Testis (tissue), 5 donors: ENCODE measurements at regions of chr12 and their contacts with region 1.

Region 1: GRCh38 chr12:7108796-7109571 is at the start of gene C1RL:
- DNase-seq: peak; percentile 93
- H3K4me3 ChIP-seq: peak within 1 kb of the TSS; percentile 55 to 74
- H3K27ac ChIP-seq: peak within 1 kb of the TSS; percentile 87 to 93
- H3K4me1 ChIP-seq: peaks cover 33% of the 10 kb centered on the region
- H3K27me3 ChIP-seq: no peaks in the 10 kb centered on the region
- CTCF ChIP-seq: peak; percentile 98 to 99 (median 98)
- POLR2A ChIP-seq: no peak
- total RNA-seq, gene C1RL: 23.9 to 31.8 TPM

Region 2: DNA sequence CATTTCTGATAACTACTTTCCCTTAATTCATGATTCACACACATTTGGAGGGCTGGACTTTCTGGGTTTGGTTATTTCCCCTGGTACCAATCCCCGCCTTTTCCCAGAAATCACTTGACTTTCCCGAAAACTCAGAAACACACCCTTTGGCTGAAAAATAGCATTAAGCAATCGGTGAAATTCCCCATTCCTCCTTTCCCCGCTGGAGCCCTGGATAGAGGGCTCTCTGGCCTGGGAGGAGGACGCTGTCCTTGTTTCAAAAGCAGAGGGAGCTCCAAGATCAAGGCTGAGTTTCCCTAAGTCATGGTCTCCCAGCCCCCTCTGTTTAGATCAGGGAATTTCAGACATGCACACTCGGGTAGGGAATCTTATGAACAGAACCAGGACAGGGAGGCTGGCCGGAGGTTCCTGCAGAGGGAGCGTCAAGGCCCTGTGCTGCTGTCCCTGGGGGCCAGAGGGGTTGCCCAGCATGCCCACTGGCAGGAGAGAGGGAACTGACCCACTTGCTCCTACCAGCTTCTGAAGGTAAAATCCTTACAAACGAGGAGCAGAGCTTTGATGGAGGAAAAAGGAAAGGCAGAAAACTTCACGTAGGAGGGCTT is 48.5 kb before region 1 on chr12 and contains the start of gene C1S:
- intact Hi-C with region 1: loop called (anchors 5 kb)
- DNase-seq: peak; percentile 81
- H3K4me3 ChIP-seq: peak within 1 kb of the TSS; percentile 24 to 58
- H3K27ac ChIP-seq: peak within 1 kb of the TSS; percentile 64 to 84
- H3K4me1 ChIP-seq: peaks cover 11% of the 10 kb centered on the region
- H3K27me3 ChIP-seq: no peaks in the 10 kb centered on the region
- CTCF ChIP-seq: peak; percentile 66 to 90 (median 86)
- POLR2A ChIP-seq: no peak
- total RNA-seq, gene C1S: 86.1 to 190 TPM

Region 3: DNA sequence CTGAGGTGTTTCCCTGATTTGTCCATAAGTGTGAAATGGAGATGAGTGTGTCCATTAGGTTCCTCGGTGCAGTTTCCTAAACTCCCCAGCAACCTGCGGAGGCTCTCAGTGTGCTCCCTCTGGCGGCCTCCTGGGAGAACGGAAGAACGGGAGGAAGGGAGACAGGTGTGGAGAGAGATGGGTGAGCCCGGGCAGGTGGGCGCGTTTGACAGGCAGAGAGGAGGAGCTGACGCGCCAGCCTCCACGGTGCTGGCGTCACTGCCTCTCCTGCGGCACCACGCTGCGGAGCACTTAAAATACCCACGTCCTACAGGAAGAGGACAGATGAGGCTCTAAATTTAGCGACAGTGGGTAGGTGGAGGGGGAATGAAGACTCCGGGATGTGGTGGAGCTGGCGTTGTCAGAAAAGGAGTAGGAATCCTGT is 53.7 kb after region 1 on chr12:
- intact Hi-C with region 1: no loop called
- DNase-seq: peak; percentile 38
- H3K4me3 ChIP-seq: no peak overlapping the region
- H3K27ac ChIP-seq: no peak overlapping the region
- H3K4me1 ChIP-seq: no peaks in the 10 kb centered on the region
- H3K27me3 ChIP-seq: no peaks in the 10 kb centered on the region
- CTCF ChIP-seq: peak in 2 of 3 experiments; percentile 22 to 45
- POLR2A ChIP-seq: no peak